Common myeloid progenitor, CD34-positive (primary cell): ENCODE measurements at regions of chr1 and their contacts with region 1.

Region 1: GRCh38 chr1:1040004-1040991 is 20.4 kb downstream of the AGRN start:
- DNase-seq: peak; percentile 84 to 88 (median 87)
- H3K4me3 ChIP-seq: peak overlapping the region in 6 of 7 experiments; percentile 15 to 69 (median 56)
- H3K27ac ChIP-seq: no peak overlapping the region
- H3K4me1 ChIP-seq: peaks cover 0 to 28% (median 25%) of the 10 kb centered on the region in 4 experiments
- H3K27me3 ChIP-seq: peaks cover 0 to 53% (median 12%) of the 10 kb centered on the region in 5 experiments

Region 2: DNA sequence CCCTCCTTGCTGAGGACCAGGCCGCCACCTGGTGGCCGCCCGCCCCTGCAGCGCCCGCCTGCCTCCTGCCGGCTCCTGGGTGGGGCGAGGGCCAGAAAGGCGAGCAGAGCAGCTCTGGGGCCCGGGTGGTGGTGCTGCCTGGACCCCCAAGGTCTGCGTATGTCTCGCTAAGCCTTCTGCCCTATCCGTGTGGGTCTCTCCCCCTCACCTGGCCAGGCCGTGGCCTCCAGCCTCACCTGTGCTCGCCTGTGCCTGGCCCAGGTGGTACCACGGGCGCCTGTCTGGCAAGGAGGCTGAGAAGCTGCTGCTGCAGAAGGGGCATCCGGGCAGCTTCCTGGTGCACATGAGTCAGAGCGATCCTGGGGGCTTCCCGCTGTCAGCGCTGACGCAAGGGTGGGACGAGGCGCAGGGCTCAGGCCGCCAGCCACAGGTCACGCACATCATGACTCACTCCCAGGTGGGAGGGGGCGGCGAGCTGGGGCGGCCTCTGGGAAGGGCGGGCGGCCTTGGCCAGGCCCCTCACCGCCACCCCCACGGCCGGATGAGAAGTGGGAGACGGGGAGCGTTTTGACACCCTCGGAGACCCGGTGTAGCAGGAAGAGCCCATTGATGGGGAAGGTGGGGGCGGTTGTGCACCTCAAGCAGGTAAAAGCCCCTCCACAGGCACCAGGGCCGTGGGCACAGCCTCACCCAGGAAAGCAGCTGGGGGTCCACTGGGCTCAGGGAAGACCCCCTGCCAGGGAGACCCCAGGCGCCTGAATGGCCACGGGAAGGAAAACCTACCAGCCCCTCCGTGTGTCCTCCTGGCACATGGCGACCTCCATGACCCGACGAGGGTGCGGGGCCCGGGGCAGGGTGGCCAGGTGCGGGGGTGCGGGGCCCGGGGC is 23.9 kb after region 1 on chr1:
- CTCF ChIA-PET with region 1: interaction called, 26 read pairs
- POLR2A ChIA-PET with region 1: interaction called, 7 read pairs
- DNase-seq: peak; percentile 97 to 99 (median 99)
- H3K4me3 ChIP-seq: peak overlapping the region in 3 of 7 experiments; percentile 46 to 66 (median 51)
- H3K27ac ChIP-seq: peak overlapping the region in 1 of 2 experiments; percentile 75
- H3K4me1 ChIP-seq: peaks cover 0 to 44% (median 42%) of the 10 kb centered on the region in 4 experiments
- H3K27me3 ChIP-seq: peaks cover 0 to 62% (median 19%) of the 10 kb centered on the region in 5 experiments

Region 3: DNA sequence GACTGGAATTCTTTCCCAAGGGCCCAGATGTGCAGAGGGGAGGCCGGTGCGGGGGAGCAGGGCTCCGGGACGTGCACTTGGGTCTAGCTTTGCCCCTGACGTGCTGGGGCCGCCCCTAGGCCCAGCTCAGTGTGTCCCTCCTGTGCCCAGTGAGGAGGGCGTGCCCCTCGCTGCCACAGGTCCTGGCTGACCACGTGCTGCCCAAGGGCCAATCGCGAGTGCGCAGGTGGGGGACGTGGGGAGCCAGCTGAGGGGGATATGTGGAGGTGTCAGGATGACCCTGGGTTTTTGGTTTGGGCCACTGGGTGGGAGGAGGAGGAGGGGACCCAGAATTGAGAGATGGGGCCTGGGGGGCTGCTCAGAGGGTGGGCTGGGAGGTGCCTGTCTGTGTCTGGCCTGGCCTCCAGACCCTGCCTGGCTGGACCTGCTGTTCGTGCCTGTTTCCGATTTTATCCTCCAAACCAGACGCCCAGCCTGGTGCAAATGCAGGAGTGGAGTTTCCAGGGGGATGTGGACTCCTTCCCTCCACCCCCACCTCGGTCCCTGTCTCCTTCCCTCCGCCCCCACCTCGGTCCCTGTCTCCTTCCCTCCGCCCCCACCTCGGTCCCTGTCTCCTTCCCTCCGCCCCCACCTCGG is 39.9 kb after region 1 on chr1:
- CTCF ChIA-PET with region 1: no interaction called
- POLR2A ChIA-PET with region 1: no interaction called
- DNase-seq: peak in 2 of 3 donors; percentile 32 to 41
- H3K4me3 ChIP-seq: peak overlapping the region in 2 of 7 experiments; percentile 40 to 57
- H3K27ac ChIP-seq: no peak overlapping the region
- H3K4me1 ChIP-seq: peaks cover 0 to 13% (median 12%) of the 10 kb centered on the region in 4 experiments
- H3K27me3 ChIP-seq: peaks cover 0 to 15% (median 0%) of the 10 kb centered on the region in 5 experiments

Region 4: DNA sequence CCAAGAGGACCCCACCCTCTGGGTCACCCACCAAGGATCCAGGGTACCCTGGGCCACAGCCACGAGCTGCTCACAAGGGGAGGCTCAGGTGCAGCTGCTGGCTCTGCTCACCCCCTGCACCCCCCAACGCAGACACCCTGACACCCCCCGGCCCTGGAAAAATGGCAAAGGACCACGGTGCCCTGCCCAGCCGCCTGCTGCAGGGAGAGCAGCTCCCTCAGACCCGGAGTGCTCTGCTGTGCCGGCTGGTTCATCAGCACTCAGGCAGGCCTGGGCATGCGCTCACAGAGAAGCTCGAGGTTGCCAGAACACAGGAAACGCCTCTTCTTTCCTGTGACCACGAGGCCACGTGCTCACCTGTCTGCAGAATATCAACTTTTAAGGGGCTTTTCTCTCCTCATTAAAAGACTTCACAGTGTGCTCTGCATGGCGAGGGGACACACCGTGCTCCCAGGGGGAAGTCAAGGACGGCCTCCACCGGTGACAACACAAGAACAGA is 210.5 kb after region 1 on chr1:
- CTCF ChIA-PET with region 1: interaction called, 10 read pairs
- POLR2A ChIA-PET with region 1: no interaction called
- DNase-seq: no peak
- H3K4me3 ChIP-seq: no peak overlapping the region
- H3K27ac ChIP-seq: no peak overlapping the region
- H3K4me1 ChIP-seq: peaks cover 0 to 16% (median 10%) of the 10 kb centered on the region in 4 experiments
- H3K27me3 ChIP-seq: peaks cover 0 to 28% (median 6%) of the 10 kb centered on the region in 5 experiments